HEK293 (cell line): ENCODE measurements at regions of chr16 and their contacts with region 1.

Region 1: GRCh38 chr16:81449899-81450608 is 5.4 kb downstream of the CMIP start:
- H3K4me3 ChIP-seq: no peak overlapping the region
- H3K27ac ChIP-seq: no peak overlapping the region
- H3K4me1 ChIP-seq: peaks cover 18% of the 10 kb centered on the region
- CTCF ChIP-seq: no peak

Region 2: GRCh38 chr16:81481207-81481821 is 31.3 kb after region 1 on chr16:
- CTCF ChIA-PET with region 1: no interaction called
- POLR2A ChIA-PET with region 1: no interaction called
- H3K4me3 ChIP-seq: no peak overlapping the region
- H3K27ac ChIP-seq: no peak overlapping the region
- H3K4me1 ChIP-seq: peaks cover 3% of the 10 kb centered on the region; the same call in 1 of the 2 replicates
- CTCF ChIP-seq: no peak

Region 3: GRCh38 chr16:81623363-81624102 is 173.5 kb after region 1 on chr16:
- CTCF ChIA-PET with region 1: interaction called, 11 read pairs
- POLR2A ChIA-PET with region 1: no interaction called
- H3K4me3 ChIP-seq: no peak overlapping the region
- H3K27ac ChIP-seq: no peak overlapping the region
- H3K4me1 ChIP-seq: no peaks in the 10 kb centered on the region
- CTCF ChIP-seq: peak; percentile 54; the same call in 1 of the 2 replicates